Heart left ventricle (tissue), 16 donors: ENCODE measurements at regions of chr15 and their contacts with region 1.

Region 1: DNA sequence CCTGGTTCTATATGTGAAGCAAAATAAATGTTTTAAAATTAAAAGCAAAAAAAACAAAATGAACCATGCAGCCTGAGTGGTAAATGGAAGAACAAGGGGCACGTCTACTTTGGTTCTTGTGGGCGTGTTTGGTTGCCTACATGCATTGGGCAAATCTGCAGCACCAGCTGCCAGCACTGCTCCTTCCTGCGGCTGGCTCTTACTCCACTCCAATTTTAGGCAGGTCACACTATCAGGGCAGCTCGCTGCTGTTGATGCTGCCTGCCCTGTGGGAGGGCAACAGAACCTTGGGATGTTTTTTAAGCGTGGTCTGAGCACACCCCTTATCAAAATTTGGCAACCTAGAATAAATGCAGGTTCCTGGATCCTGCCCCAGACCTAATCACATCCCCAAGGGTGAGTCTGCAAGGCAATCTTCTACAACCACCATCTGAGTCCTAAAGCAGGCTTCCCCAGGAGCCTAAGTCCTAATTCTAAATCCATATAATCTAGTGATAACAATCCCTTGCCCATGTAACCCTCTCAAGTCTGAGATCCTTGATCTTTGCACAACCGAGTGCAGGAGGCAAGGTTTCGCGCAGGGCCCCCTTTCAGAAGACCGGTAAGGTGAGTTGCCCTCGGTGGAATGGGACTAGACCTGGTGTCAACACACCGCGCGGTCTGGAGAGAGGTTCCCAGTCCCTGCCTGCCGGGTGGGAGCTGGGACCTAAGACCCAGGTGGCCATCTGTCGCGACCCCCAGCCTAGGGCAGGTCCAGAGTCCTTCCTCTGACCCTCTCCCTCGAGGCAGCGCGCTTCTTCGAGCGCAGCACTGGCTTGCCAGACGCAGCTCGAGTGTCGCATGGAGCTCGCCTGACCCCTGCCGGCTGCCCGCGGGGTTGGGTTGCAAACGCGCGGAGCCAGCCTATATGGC is 15.9 kb downstream of the IVD start:
- DNase-seq: peak; percentile 75 to 91 (median 80)
- ATAC-seq: peak; percentile 87 to 92 (median 90)
- H3K4me3 ChIP-seq: no peak overlapping the region
- H3K27ac ChIP-seq: peak overlapping the region; percentile 4 to 76 (median 69)
- H3K4me1 ChIP-seq: peaks cover 0 to 24% (median 18%) of the 10 kb centered on the region in 12 donors
- H3K27me3 ChIP-seq: no peaks in the 10 kb centered on the region
- CTCF ChIP-seq: peak; percentile 87 to 99 (median 94)
- POLR2A ChIP-seq: no peak

Region 2: GRCh38 chr15:40274350-40275274 is 146.9 kb before region 1 on chr15:
- intact Hi-C with region 1: loop called in 6 of 10 experiments (anchors 1 to 5 kb)
- DNase-seq: peak; percentile 79 to 90 (median 82)
- ATAC-seq: peak; percentile 43 to 69 (median 55)
- H3K4me3 ChIP-seq: no peak overlapping the region
- H3K27ac ChIP-seq: no peak overlapping the region
- H3K4me1 ChIP-seq: peaks cover 0 to 31% (median 2%) of the 10 kb centered on the region in 12 donors
- H3K27me3 ChIP-seq: peaks cover 2 to 20% (median 8%) of the 10 kb centered on the region in 9 donors
- CTCF ChIP-seq: peak; percentile 99 to 100 (median 100)
- POLR2A ChIP-seq: no peak

Region 3: GRCh38 chr15:40307421-40308211 is 113.9 kb before region 1 on chr15 and contains the start of gene PLCB2:
- intact Hi-C with region 1: loop called in 1 of 10 experiments (anchors 10 kb)
- DNase-seq: peak; percentile 43 to 81 (median 52)
- ATAC-seq: peak; percentile 39 to 63 (median 57)
- H3K4me3 ChIP-seq: peak within 1 kb of the TSS in 10 of 12 donors; percentile 9 to 65 (median 33)
- H3K27ac ChIP-seq: peak within 1 kb of the TSS in 5 of 12 donors; percentile 54 to 95 (median 63)
- H3K4me1 ChIP-seq: peaks cover 0 to 25% (median 0%) of the 10 kb centered on the region in 12 donors
- H3K27me3 ChIP-seq: peaks cover 0 to 6% (median 0%) of the 10 kb centered on the region in 9 donors
- CTCF ChIP-seq: peak in 7 of 12 donors; percentile 4 to 38 (median 24)
- POLR2A ChIP-seq: no peak
- total RNA-seq, gene PLCB2: 1.6 to 46.2 (median 4.8) TPM

Region 4: DNA sequence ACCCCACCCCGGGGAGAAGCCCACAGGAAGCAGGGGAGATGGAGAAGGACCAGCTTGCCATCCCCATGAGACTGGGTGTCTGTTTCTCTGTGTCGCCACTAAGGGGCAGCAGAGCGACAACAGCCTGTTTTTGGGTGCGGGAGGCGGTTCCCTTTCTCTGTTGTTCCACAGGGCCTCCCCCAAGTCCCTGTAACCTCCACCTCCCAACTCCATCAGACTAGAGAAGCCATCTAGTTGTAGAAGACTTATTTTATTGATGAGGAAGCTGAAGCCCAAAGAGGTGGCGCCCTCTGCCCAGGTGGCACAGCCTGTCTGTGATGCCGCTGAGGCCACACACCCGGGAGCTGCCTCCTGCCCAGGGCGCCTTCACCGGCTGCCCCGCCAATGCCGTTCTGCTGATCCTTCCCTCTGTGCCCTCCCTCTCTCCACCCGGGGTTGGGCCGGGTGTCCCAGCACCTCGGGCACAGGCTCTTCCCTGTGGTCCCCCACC is 76.8 kb before region 1 on chr15:
- intact Hi-C with region 1: loop called in 7 of 10 experiments (anchors 1 to 5 kb)
- DNase-seq: peak in 3 of 5 donors; percentile 61 to 84 (median 66)
- ATAC-seq: no peak
- H3K4me3 ChIP-seq: no peak overlapping the region
- H3K27ac ChIP-seq: peak overlapping the region in 2 of 12 donors; percentile 80 to 96
- H3K4me1 ChIP-seq: peaks cover 14 to 58% (median 41%) of the 10 kb centered on the region in 12 donors
- H3K27me3 ChIP-seq: no peaks in the 10 kb centered on the region
- CTCF ChIP-seq: peak; percentile 58 to 85 (median 77)
- POLR2A ChIP-seq: no peak